Naive thymus-derived CD4-positive, alpha-beta T cell (primary cell): ENCODE measurements at regions of chr6 and their contacts with region 1.

Region 1: DNA sequence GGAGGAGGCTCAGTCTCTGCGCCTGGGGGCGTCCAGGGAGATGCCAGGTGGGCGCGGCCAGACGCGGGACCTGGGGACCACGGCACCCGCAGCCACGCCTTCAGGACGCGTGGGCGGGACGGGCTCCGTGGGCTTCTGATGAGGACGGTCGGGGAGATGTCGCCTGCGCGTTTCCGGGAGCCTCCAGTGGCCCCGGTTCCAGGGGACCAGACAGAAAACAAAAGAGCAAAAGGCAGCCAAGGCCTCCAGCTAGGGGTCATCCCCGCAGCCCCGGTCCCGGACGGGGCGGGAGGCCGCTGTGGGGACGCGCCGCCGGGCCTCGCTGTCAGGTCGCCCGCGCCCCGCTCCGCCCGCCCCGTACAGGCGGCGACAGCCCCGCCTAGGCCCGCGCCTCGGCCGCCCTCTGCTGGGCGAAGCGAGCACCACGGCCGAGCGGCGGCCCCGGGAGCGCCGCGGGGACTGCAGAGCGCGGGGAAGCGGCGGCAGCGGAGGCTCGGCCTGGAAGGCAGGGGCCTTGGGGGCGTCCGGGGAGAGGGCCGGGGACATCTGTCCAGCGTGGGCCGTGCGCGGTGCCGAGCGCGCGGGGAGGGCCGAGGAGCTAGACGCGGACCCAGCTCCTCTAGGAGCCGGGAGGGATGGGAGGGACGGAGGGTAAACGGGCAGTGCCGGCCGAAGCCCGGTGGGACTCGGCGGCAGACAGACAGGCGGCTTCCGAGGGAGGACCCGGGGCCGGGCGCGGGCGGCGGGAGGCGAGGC is 48.7 kb downstream of the TMEM242 start:
- DNase-seq: peak; percentile 72 to 94 (median 88)
- ATAC-seq: peak; percentile 95
- H3K4me3 ChIP-seq: peak overlapping the region; percentile 80
- H3K4me3 Mint-ChIP-seq: peak overlapping the region; percentile 83 to 96 (median 92)
- H3K27ac ChIP-seq: peak overlapping the region; percentile 93
- H3K27ac Mint-ChIP-seq: peak overlapping the region; percentile 89 to 98 (median 92)
- H3K4me1 ChIP-seq: peaks cover 6 to 7% of the 10 kb centered on the region in 2 donors
- H3K4me1 Mint-ChIP-seq: peaks cover 0 to 10% (median 8%) of the 10 kb centered on the region in 7 donors
- H3K27me3 ChIP-seq: no peaks in the 10 kb centered on the region
- H3K27me3 Mint-ChIP-seq: peaks cover 0 to 15% (median 0%) of the 10 kb centered on the region in 5 donors

Region 2: GRCh38 chr6:155314092-155314772 is 1960.4 kb before region 1 on chr6 and contains the start of gene TFB1M:
- CTCF ChIA-PET with region 1: no interaction called
- POLR2A ChIA-PET with region 1: interaction called, 3 read pairs
- intact Hi-C with region 1: loop called (anchors 1 to 2 kb)
- DNase-seq: peak; percentile 84 to 98 (median 94)
- ATAC-seq: peak; percentile 96
- H3K4me3 ChIP-seq: peak within 1 kb of the TSS; percentile 86
- H3K4me3 Mint-ChIP-seq: peak within 1 kb of the TSS; percentile 80 to 98 (median 96)
- H3K27ac ChIP-seq: peak within 1 kb of the TSS; percentile 90
- H3K27ac Mint-ChIP-seq: peak within 1 kb of the TSS; percentile 84 to 97 (median 93)
- H3K4me1 ChIP-seq: peaks cover 3 to 5% of the 10 kb centered on the region in 2 donors
- H3K4me1 Mint-ChIP-seq: peaks cover 10 to 48% (median 41%) of the 10 kb centered on the region in 7 donors
- H3K27me3 ChIP-seq: no peaks in the 10 kb centered on the region
- H3K27me3 Mint-ChIP-seq: no peaks in the 10 kb centered on the region
- total RNA-seq, gene TFB1M: 20.5 to 45.4 (median 29.7) TPM

Region 3: GRCh38 chr6:156396068-156396771 is 878.4 kb before region 1 on chr6:
- CTCF ChIA-PET with region 1: no interaction called
- POLR2A ChIA-PET with region 1: interaction called, 4 read pairs
- intact Hi-C with region 1: loop called in 1 of 2 experiments (anchors 5 kb)
- DNase-seq: peak in 7 of 9 donors; percentile 67 to 85 (median 77)
- ATAC-seq: peak; percentile 85
- H3K4me3 ChIP-seq: peak overlapping the region; percentile 14
- H3K4me3 Mint-ChIP-seq: peak overlapping the region; percentile 49 to 95 (median 84)
- H3K27ac ChIP-seq: peak overlapping the region; percentile 85
- H3K27ac Mint-ChIP-seq: peak overlapping the region; percentile 60 to 100 (median 99)
- H3K4me1 ChIP-seq: peaks cover 16 to 67% of the 10 kb centered on the region in 2 donors
- H3K4me1 Mint-ChIP-seq: peaks cover 17 to 99% (median 89%) of the 10 kb centered on the region in 7 donors
- H3K27me3 ChIP-seq: no peaks in the 10 kb centered on the region
- H3K27me3 Mint-ChIP-seq: peaks cover 0 to 40% (median 0%) of the 10 kb centered on the region in 5 donors

Region 4: DNA sequence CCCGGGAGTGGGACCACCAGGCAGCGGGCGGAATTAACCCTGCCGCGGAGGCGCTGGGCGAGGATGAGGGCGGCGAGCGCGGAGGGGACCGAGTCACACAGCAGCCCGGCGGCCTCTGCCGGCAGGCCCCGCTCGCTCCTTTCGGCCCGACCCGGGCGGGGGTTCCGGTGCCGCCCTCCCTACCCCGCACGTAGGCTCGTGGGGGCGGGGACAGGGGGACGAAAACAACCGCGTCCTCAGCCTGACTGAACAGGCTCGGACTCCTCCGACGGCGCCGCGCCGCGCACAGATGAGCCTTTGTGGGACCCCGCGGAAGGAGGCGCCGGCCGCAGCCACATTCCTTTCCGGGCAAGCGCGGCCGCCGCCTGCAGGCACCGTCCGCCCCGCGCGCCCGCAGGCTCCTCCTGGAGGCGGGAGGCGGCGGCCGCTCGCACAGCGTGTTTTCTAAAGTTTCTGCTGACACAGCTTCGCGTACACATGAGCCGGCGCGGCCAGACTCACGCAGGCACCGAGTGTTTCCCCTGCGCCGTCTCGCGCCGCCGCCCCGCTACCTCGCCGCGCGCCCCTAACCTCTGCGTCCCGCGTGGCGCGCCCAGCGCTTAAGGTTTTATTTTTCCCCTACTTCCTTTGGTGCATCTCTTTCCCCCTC is 253.2 kb before region 1 on chr6:
- CTCF ChIA-PET with region 1: no interaction called
- POLR2A ChIA-PET with region 1: interaction called, 3 read pairs
- intact Hi-C with region 1: loop called (anchors 1 kb)
- DNase-seq: peak; percentile 85 to 93 (median 91)
- ATAC-seq: peak; percentile 90
- H3K4me3 ChIP-seq: peak overlapping the region; percentile 79
- H3K4me3 Mint-ChIP-seq: peak overlapping the region; percentile 76 to 98 (median 95)
- H3K27ac ChIP-seq: peak overlapping the region; percentile 100
- H3K27ac Mint-ChIP-seq: peak overlapping the region; percentile 86 to 100 (median 99)
- H3K4me1 ChIP-seq: peaks cover 5 to 21% of the 10 kb centered on the region in 2 donors
- H3K4me1 Mint-ChIP-seq: peaks cover 32 to 82% (median 64%) of the 10 kb centered on the region in 7 donors
- H3K27me3 ChIP-seq: no peaks in the 10 kb centered on the region
- H3K27me3 Mint-ChIP-seq: no peaks in the 10 kb centered on the region

Region 5: DNA sequence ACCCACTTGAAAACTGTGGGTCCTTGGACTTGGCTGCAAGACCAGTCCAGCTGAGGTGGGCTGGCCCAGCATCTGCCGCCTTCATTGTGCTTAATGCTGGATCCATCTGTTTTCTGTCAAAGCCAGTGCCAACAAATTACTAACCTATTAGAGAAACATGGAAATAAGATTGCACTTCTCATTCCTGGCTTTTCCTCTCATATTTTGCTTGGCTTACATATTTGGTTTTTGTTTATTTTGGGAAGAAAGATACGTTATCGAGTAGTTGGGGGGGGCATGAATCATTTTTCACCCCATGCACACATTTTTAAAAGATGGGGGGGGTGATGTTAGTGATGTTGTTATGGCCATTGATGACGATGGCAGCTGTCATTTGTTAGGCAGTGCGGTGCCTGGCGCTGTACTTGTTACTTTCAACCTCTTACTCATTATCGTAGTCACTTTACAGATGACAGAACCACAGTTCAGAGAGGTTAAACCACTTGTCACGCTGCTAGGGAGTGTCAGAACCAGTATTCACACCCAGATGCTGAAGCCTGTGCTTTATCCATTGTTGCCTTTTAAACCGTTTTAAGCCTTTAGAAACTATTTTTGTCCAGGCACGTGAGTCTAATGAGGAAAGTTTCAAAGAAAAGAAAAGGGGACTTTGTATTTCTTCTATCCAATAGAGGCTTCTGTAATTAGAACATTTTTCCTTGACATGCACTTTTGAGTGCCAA is 131.3 kb before region 1 on chr6:
- CTCF ChIA-PET with region 1: no interaction called
- POLR2A ChIA-PET with region 1: no interaction called
- intact Hi-C with region 1: loop called in 1 of 2 experiments (anchors 1 kb)
- DNase-seq: no peak
- ATAC-seq: peak; percentile 83
- H3K4me3 ChIP-seq: no peak overlapping the region
- H3K4me3 Mint-ChIP-seq: no peak overlapping the region
- H3K27ac ChIP-seq: no peak overlapping the region
- H3K27ac Mint-ChIP-seq: peak overlapping the region in 1 of 9 donors; percentile 20
- H3K4me1 ChIP-seq: peaks cover 0 to 15% of the 10 kb centered on the region in 2 donors
- H3K4me1 Mint-ChIP-seq: peaks cover 0 to 32% (median 7%) of the 10 kb centered on the region in 7 donors
- H3K27me3 ChIP-seq: no peaks in the 10 kb centered on the region
- H3K27me3 Mint-ChIP-seq: no peaks in the 10 kb centered on the region

Region 6: GRCh38 chr6:157235600-157236039 is 39.0 kb before region 1 on chr6:
- CTCF ChIA-PET with region 1: interaction called, 6 read pairs
- POLR2A ChIA-PET with region 1: interaction called, 8 read pairs
- intact Hi-C with region 1: loop called (anchors 1 kb)
- DNase-seq: peak; percentile 38 to 61 (median 57)
- ATAC-seq: peak; percentile 89
- H3K4me3 ChIP-seq: peak overlapping the region; percentile 67
- H3K4me3 Mint-ChIP-seq: peak overlapping the region; percentile 91 to 97 (median 93)
- H3K27ac ChIP-seq: no peak overlapping the region
- H3K27ac Mint-ChIP-seq: peak overlapping the region in 8 of 9 donors; percentile 40 to 82 (median 70)
- H3K4me1 ChIP-seq: peaks cover 0 to 8% of the 10 kb centered on the region in 2 donors
- H3K4me1 Mint-ChIP-seq: peaks cover 19 to 35% (median 24%) of the 10 kb centered on the region in 7 donors
- H3K27me3 ChIP-seq: no peaks in the 10 kb centered on the region
- H3K27me3 Mint-ChIP-seq: peaks cover 11 to 56% (median 30%) of the 10 kb centered on the region in 5 donors

Region 7: GRCh38 chr6:158559895-158560835 is 1285.5 kb after region 1 on chr6 and contains the start of gene TMEM181:
- CTCF ChIA-PET with region 1: no interaction called
- POLR2A ChIA-PET with region 1: no interaction called
- intact Hi-C with region 1: loop called in 1 of 2 experiments (anchors 10 kb)
- DNase-seq: peak; percentile 73 to 87 (median 86)
- ATAC-seq: peak; percentile 96
- H3K4me3 ChIP-seq: peak within 1 kb of the TSS; percentile 76
- H3K4me3 Mint-ChIP-seq: peak within 1 kb of the TSS; percentile 90 to 98 (median 94)
- H3K27ac ChIP-seq: peak within 1 kb of the TSS; percentile 94
- H3K27ac Mint-ChIP-seq: peak within 1 kb of the TSS; percentile 93 to 97 (median 94)
- H3K4me1 ChIP-seq: peaks cover 30 to 38% of the 10 kb centered on the region in 2 donors
- H3K4me1 Mint-ChIP-seq: peaks cover 26 to 46% (median 44%) of the 10 kb centered on the region in 7 donors
- H3K27me3 ChIP-seq: no peaks in the 10 kb centered on the region
- H3K27me3 Mint-ChIP-seq: peaks cover 0 to 17% (median 0%) of the 10 kb centered on the region in 5 donors
- total RNA-seq, gene TMEM181: 14.9 to 17.2 (median 16.5) TPM